ENCODE measurements at regions of chr2 and their contacts with region 1.

Region 1: DNA sequence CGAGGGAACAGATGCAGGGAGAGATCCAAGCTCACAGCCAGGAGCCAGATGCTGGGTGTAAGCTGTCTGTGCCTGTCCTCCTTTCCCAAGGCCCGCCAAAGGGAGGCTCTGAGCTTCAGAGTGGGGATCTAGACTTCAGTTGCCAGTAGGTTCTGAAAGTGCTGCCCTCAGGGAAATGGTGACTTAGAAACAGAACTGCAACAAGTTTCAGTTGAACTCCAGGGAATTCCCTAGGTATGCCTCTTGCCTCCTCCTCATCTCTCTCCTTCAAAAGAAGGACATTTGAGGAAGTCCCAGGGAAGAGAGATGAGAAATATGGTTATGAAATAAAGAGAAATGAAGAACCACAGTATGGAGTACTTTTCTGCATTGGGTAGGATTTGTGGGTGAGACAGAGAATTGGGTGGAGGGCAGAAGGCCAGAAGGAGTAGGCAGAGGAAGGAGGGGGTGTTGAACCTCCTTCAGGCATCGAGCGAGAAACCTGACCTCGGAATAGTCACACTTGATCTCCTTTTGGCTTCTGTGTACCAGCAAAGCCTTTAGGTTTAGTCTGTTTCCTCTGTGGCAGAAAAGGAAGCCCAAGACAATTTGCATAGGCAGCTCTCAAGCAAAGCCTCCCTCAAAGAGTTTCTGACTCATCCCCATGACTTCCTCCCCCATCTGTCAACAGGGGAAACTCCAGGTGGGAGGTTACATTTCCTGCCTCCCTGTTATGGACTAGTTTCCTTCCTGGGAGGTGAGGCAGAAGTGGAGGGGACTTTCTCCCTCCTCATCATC is 45.7 kb downstream of the QPCT start:
- DNase-seq: peak; percentile 87
- H3K4me3 Mint-ChIP-seq: no peak overlapping the region
- H3K27ac Mint-ChIP-seq: peak overlapping the region; percentile 71
- H3K4me1 Mint-ChIP-seq: peaks cover 13% of the 10 kb centered on the region
- H3K27me3 Mint-ChIP-seq: no peaks in the 10 kb centered on the region

Region 2: GRCh38 chr2:37168217-37168981 is 221.8 kb before region 1 on chr2:
- CTCF ChIA-PET with region 1: interaction called, 13 read pairs
- intact Hi-C with region 1: loop called (anchors 2 kb)
- DNase-seq: peak; percentile 52
- H3K4me3 Mint-ChIP-seq: no peak overlapping the region
- H3K27ac Mint-ChIP-seq: no peak overlapping the region
- H3K4me1 Mint-ChIP-seq: no peaks in the 10 kb centered on the region
- H3K27me3 Mint-ChIP-seq: no peaks in the 10 kb centered on the region

Region 3: DNA sequence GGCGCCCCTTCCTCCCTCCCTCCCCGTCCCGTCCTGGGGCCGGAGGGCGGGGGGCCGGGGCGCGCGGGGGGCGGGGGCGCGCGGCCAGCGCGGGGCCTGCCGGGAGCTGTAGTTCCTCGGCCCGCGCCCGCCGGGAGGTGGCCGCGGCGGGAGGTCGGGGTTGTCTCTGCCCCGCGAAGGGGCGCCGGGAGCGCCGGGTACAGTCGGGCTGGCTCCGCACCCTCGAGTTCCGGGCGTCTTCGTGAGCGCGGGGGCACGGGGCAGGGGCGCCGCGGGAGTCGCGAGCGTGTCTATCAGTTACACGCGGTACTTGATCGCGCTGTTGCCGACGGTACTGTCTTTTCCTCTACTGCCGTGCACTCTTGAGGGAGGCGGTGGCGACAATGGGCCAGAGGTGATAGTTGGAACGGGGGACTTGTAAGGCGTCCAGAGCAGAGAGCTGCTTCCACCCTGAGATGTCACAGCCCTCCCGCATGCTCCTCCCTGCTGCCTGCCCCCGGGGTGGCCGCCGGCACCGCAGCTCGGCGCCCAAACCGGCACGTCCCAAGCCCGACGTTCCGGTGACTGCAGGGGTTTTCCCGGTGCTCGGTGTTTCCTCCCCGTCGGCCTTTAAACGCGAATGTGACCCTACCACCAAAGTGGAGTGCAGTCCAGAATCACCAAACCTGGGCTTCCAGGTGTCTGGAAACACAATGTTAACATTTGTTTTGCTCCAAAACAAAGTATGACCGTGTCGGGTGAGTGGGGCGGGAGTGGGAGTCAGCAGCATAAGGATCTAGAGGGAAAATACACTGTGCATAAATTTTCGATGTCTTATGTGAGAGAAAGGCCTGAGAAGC is 65.2 kb before region 1 on chr2 and contains the start of gene PRKD3:
- CTCF ChIA-PET with region 1: interaction called, 14 read pairs
- intact Hi-C with region 1: loop called (anchors 1 kb)
- DNase-seq: peak; percentile 51
- H3K4me3 Mint-ChIP-seq: peak within 1 kb of the TSS; percentile 93
- H3K27ac Mint-ChIP-seq: peak within 1 kb of the TSS; percentile 84
- H3K4me1 Mint-ChIP-seq: peaks cover 29% of the 10 kb centered on the region
- H3K27me3 Mint-ChIP-seq: peaks cover 17% of the 10 kb centered on the region
- total RNA-seq, gene PRKD3: 13.0 TPM

Region 4: GRCh38 chr2:37376421-37377186 is 13.6 kb before region 1 on chr2:
- CTCF ChIA-PET with region 1: interaction called, 25 read pairs
- intact Hi-C with region 1: loop called (anchors 1 kb)
- DNase-seq: peak; percentile 67
- H3K4me3 Mint-ChIP-seq: no peak overlapping the region
- H3K27ac Mint-ChIP-seq: no peak overlapping the region
- H3K4me1 Mint-ChIP-seq: peaks cover 34% of the 10 kb centered on the region
- H3K27me3 Mint-ChIP-seq: peaks cover 45% of the 10 kb centered on the region

Region 5: GRCh38 chr2:37672104-37672869 is 282.1 kb after region 1 on chr2:
- CTCF ChIA-PET with region 1: no interaction called
- intact Hi-C with region 1: loop called (anchors 5 kb)
- DNase-seq: peak; percentile 71
- H3K4me3 Mint-ChIP-seq: peak overlapping the region; percentile 75
- H3K27ac Mint-ChIP-seq: peak overlapping the region; percentile 63
- H3K4me1 Mint-ChIP-seq: peaks cover 40% of the 10 kb centered on the region
- H3K27me3 Mint-ChIP-seq: no peaks in the 10 kb centered on the region

Region 6: GRCh38 chr2:37877457-37878315 is 487.5 kb after region 1 on chr2:
- CTCF ChIA-PET with region 1: interaction called, 98 read pairs
- intact Hi-C with region 1: loop called (anchors 1 kb)
- DNase-seq: peak; percentile 55
- H3K4me3 Mint-ChIP-seq: no peak overlapping the region
- H3K27ac Mint-ChIP-seq: no peak overlapping the region
- H3K4me1 Mint-ChIP-seq: peaks cover 7% of the 10 kb centered on the region
- H3K27me3 Mint-ChIP-seq: peaks cover 15% of the 10 kb centered on the region

Measured in activated naive CD4-positive, alpha-beta T cell treated with anti-CD3 and anti-CD28 coated beads for 36 hours (primary cell).